Posterior cingulate gyrus (tissue), 11 donors: ENCODE measurements at regions of chrX and their contacts with region 1.

Region 1: DNA sequence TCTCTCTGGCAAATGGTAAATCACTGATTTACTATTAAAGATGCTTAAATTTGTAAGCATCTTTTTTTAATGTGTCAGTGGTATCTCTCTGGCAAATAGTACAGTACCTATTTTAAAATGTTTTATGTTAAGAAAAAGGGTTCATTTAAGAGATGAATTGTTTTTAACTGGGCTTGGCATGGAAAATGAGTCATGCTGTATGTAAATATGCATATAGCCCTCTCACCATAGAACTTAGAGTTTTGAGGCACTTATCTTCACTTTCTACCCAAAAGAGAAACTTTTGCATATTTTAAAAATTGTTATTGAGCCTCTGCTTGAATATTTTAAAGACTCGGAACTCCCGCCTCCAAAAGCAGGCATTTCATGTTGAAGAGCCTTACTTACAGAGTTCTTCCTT is 37.9 kb downstream of the KLHL34 start:
- DNase-seq: no peak

Region 2: DNA sequence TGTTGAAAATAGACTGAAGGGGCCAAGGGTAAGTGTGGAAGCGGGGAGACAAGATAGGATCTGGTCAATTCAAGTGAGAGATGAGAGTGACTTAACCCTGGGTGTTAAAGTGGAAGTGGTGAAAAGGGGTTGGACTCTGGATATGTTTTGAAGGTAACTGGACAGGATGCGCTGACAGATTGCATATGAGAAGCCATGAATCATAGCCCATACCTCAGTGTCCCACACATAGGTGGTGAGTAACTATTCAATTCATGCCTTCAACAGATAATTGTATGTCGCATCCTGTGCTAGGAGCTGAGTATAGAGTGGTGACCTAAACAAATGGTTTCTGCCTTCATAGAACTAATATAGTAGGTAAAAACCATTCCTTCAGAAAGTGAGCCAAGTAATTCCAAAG is 38.8 kb before region 1 on chrX:
- intact Hi-C with region 1: loop called (anchors 2 kb)
- DNase-seq: no peak

Region 3: GRCh38 chrX:21855937-21856415 is 235.7 kb after region 1 on chrX and contains the start of gene YY2:
- intact Hi-C with region 1: no loop called
- DNase-seq: no peak